ENCODE measurements at regions of chr17 and their contacts with region 1.

Region 1: DNA sequence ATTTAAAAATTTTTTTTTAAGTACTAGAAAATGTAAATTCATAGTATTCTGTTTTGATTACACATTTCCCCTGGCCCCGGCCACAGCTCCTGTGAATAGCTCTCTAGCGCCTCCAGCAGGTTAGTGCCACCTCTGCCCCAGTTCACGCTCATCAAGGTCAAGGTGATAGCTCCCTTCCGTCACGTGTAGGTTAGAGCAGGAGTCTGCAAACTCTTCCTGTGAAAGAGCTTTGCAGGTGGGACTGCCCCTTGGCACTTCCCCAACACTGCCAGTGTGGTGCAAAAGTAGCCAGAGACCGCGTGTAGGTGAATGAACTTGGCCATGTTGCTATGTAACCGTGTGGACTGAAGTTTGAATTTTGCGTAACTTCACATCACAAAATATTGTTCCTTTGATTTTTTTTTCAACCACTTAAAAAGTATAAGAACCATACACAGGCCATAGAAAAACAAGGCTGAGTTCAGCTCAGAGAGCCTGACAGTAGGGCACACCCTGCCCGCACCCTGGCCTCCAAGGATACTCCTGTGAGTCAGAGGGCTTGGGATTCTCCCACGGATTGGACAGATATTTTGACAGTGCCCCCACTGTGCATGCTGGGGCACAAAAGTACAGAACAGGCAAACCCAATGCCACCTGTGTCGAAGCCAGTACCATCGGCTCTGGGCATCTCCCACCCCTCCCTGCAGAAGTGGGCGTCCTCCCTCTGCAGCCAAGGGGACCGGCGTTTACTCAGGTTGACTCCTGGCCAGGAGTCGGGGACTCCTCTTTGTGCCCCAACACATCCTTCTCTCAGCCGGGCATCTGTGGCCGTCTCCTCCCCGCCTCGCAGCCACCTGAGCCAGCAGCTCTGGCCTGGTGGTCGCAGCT is 92.0 kb upstream of the CHMP6 start:
- DNase-seq: peak; percentile 95
- H3K4me3 Mint-ChIP-seq: no peak overlapping the region
- H3K27ac Mint-ChIP-seq: peak overlapping the region; percentile 68
- H3K4me1 Mint-ChIP-seq: peaks cover 51% of the 10 kb centered on the region
- H3K27me3 Mint-ChIP-seq: no peaks in the 10 kb centered on the region

Region 2: GRCh38 chr17:80561541-80562100 is 338.0 kb before region 1 on chr17:
- intact Hi-C with region 1: no loop called
- DNase-seq: no peak
- H3K4me3 Mint-ChIP-seq: no peak overlapping the region
- H3K27ac Mint-ChIP-seq: no peak overlapping the region
- H3K4me1 Mint-ChIP-seq: peaks cover 6% of the 10 kb centered on the region
- H3K27me3 Mint-ChIP-seq: no peaks in the 10 kb centered on the region

Region 3: GRCh38 chr17:80575057-80575875 is 324.4 kb before region 1 on chr17:
- intact Hi-C with region 1: loop called (anchors 5 kb)
- DNase-seq: peak; percentile 97
- H3K4me3 Mint-ChIP-seq: no peak overlapping the region
- H3K27ac Mint-ChIP-seq: no peak overlapping the region
- H3K4me1 Mint-ChIP-seq: peaks cover 27% of the 10 kb centered on the region
- H3K27me3 Mint-ChIP-seq: no peaks in the 10 kb centered on the region

Measured in activated CD4-positive, alpha-beta T cell treated with anti-CD3 and anti-CD28 coated beads, Interleukin-2, amount 10 ng/mL, durations not matched to agents 24 days and 14 days (primary cell).